Mammary epithelial cell (primary cell): ENCODE measurements at regions of chr7 and their contacts with region 1.

Region 1: DNA sequence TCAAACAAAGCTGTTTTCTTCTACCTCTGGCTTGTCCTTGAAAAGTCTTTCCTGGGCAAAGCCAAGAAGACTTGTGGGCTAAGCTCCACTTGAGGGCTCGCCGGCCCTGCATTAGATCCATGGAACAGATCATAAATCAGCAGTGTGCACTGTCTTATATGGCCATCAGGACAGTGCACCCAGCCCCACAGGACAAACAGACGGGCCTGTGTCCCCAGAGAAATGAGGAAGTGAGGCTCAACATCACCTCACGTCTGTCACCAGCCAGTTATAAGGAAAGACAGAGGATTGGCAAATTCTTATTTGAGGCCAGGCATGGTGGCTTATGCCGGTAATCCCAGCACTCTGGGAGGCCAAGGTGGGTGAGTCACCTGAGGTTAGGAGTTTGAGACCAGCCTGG is 12.3 kb upstream of the IFT22 start:
- DNase-seq: no peak
- H3K4me3 ChIP-seq: no peak overlapping the region
- H3K27ac ChIP-seq: no peak overlapping the region
- H3K4me1 ChIP-seq: no peaks in the 10 kb centered on the region
- H3K27me3 ChIP-seq: no peaks in the 10 kb centered on the region
- CTCF ChIP-seq: no peak

Region 2: GRCh38 chr7:101258243-101258731 is 75.6 kb before region 1 on chr7:
- CTCF ChIA-PET with region 1: no interaction called
- dilution Hi-C with region 1: loop called (anchors 5 kb)
- in situ Hi-C with region 1: no loop called
- intact Hi-C with region 1: no loop called
- DNase-seq: no peak
- H3K4me3 ChIP-seq: no peak overlapping the region
- H3K27ac ChIP-seq: no peak overlapping the region
- H3K4me1 ChIP-seq: no peaks in the 10 kb centered on the region
- H3K27me3 ChIP-seq: no peaks in the 10 kb centered on the region
- CTCF ChIP-seq: no peak

Region 3: GRCh38 chr7:101373812-101374614 is 40.1 kb after region 1 on chr7:
- CTCF ChIA-PET with region 1: no interaction called
- dilution Hi-C with region 1: no loop called
- in situ Hi-C with region 1: no loop called
- intact Hi-C with region 1: no loop called
- DNase-seq: no peak
- H3K4me3 ChIP-seq: no peak overlapping the region
- H3K27ac ChIP-seq: no peak overlapping the region
- H3K4me1 ChIP-seq: no peaks in the 10 kb centered on the region
- H3K27me3 ChIP-seq: no peaks in the 10 kb centered on the region
- CTCF ChIP-seq: no peak

Region 4: GRCh38 chr7:101428093-101428866 is 94.4 kb after region 1 on chr7:
- CTCF ChIA-PET with region 1: interaction called, 6 read pairs
- dilution Hi-C with region 1: loop called (anchors 5 kb)
- in situ Hi-C with region 1: no loop called
- intact Hi-C with region 1: no loop called
- DNase-seq: no peak
- H3K4me3 ChIP-seq: no peak overlapping the region
- H3K27ac ChIP-seq: no peak overlapping the region
- H3K4me1 ChIP-seq: peaks cover 10% of the 10 kb centered on the region
- H3K27me3 ChIP-seq: no peaks in the 10 kb centered on the region
- CTCF ChIP-seq: no peak